Motor neuron (in vitro differentiated cells): ENCODE measurements at regions of chr7 and their contacts with region 1.

Region 1: GRCh38 chr7:73606801-73607691 is 17.3 kb downstream of the MLXIPL start:
- ATAC-seq: peak; percentile 62 to 95 (median 87)
- H3K4me3 ChIP-seq: no peak overlapping the region
- H3K27ac ChIP-seq: no peak overlapping the region
- H3K4me1 ChIP-seq: no peaks in the 10 kb centered on the region

Region 2: GRCh38 chr7:73678862-73679261 is 71.8 kb after region 1 on chr7:
- in situ Hi-C with region 1: loop called in 1 of 9 experiments (anchors 10 kb)
- ATAC-seq: no peak
- H3K4me3 ChIP-seq: no peak overlapping the region
- H3K27ac ChIP-seq: no peak overlapping the region
- H3K4me1 ChIP-seq: peaks cover 20 to 24% of the 10 kb centered on the region in 2 donors

Region 3: GRCh38 chr7:73721377-73721817 is 114.4 kb after region 1 on chr7:
- in situ Hi-C with region 1: loop called in 3 of 9 experiments (anchors 10 kb)
- ATAC-seq: peak in 1 of 8 experiments; percentile 4
- H3K4me3 ChIP-seq: no peak overlapping the region
- H3K27ac ChIP-seq: no peak overlapping the region
- H3K4me1 ChIP-seq: peaks cover 9 to 16% of the 10 kb centered on the region in 2 donors

Region 4: GRCh38 chr7:73738612-73739374 is 131.7 kb after region 1 on chr7 and contains the start of gene ABHD11:
- in situ Hi-C with region 1: loop called in 1 of 9 experiments (anchors 10 kb)
- ATAC-seq: peak; percentile 71 to 90 (median 84)
- H3K4me3 ChIP-seq: peak within 1 kb of the TSS; percentile 54 to 66 (median 62)
- H3K27ac ChIP-seq: peak within 1 kb of the TSS; percentile 70 to 78
- H3K4me1 ChIP-seq: peaks cover 22 to 29% of the 10 kb centered on the region in 2 donors
- total RNA-seq, gene ABHD11: 6.4 to 22.0 (median 13.3) TPM

Region 5: DNA sequence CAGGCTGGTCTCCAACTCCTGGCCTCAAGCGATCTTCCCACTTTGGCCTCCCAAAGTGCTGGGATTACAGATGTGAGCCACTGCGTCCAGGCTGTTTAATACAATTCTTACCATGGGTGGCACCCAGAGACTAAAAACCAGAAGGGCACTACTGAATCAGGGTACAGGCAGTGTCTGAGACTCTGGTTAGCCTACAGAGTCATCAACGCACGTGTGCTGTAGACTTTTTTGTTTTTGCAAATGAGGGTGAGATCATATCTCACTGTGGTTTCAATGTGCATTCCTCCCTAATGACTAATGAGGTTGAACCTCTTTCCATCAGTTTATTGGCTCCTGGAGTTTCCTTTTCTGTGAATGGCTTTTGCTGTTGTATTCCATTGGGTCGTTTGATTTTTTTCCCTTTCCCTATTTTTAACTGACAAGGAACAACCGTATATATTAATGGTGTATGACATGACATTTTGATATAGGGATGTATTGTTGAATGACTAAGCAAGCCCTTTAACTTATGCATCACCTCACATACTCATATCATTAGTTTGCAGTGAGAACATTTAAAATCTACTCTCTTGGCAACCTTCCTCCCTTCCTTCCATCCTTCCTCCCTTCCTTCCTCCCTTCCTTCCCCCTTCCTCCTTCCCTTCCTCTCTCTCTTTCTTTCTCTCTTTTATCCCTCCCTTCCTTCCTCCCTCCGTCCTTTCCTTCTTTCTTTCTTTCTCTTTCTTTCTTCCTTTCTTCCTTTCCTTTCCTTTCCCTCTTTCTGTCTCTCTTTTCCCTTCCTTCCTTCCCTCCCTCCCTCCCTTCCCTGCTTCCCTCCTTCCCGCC is 244.6 kb after region 1 on chr7:
- in situ Hi-C with region 1: loop called in 3 of 9 experiments (anchors 10 to 25 kb)
- ATAC-seq: peak; percentile 63 to 93 (median 83)
- H3K4me3 ChIP-seq: no peak overlapping the region
- H3K27ac ChIP-seq: no peak overlapping the region
- H3K4me1 ChIP-seq: no peaks in the 10 kb centered on the region